Motor neuron (in vitro differentiated cells): ENCODE measurements at regions of chr9 and their contacts with region 1.

Region 1: GRCh38 chr9:98974994-98975712 is 31.4 kb downstream of the COL15A1 start:
- ATAC-seq: peak; percentile 64 to 94 (median 79)
- H3K4me3 ChIP-seq: peak overlapping the region; percentile 13 to 29 (median 21)
- H3K27ac ChIP-seq: no peak overlapping the region
- H3K4me1 ChIP-seq: peaks cover 7 to 16% of the 10 kb centered on the region in 2 donors

Region 2: GRCh38 chr9:99140685-99141314 is 165.6 kb after region 1 on chr9:
- in situ Hi-C with region 1: loop called in 1 of 9 experiments (anchors 25 kb)
- ATAC-seq: peak in 5 of 8 experiments; percentile 40 to 91 (median 87)
- H3K4me3 ChIP-seq: no peak overlapping the region
- H3K27ac ChIP-seq: no peak overlapping the region
- H3K4me1 ChIP-seq: no peaks in the 10 kb centered on the region

Region 3: DNA sequence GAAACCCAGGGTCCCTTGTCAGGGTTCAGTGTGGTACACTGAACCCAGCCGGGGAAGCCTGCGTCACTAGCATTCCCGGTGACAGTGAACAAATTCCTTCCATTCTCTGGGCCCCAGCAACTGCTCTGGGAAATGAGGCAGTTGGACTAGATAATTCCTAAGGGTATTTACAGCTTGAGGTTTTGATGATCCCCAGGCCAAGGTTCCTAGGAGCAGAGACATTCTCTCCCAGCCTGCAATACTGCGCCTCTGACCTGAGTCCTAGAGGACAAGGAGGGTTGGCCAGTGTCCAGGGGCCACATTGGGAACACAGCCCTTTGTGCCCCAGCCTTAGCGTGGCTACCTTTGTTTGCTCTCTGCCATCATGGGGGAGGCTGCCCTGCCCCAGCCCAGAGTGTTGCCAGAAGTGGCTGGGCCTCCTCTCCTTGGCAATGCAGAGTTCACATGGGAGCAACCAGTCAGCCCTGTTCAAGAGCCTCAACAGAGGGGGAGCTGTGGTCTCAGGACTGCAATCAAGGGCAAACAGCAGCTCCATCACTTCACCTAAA is 425.1 kb after region 1 on chr9:
- in situ Hi-C with region 1: no loop called
- ATAC-seq: peak in 3 of 8 experiments; percentile 81 to 94 (median 88)
- H3K4me3 ChIP-seq: no peak overlapping the region
- H3K27ac ChIP-seq: no peak overlapping the region
- H3K4me1 ChIP-seq: peaks cover 0 to 4% of the 10 kb centered on the region in 2 donors